Caco-2 (cell line): ENCODE measurements at regions of chr10 and their contacts with region 1.

Region 1: GRCh38 chr10:96017191-96017687 is 26.1 kb upstream of the CCNJ start:
- DNase-seq: peak; percentile 54 to 75
- H3K4me3 ChIP-seq: no peak overlapping the region
- H3K4me3 Mint-ChIP-seq: no peak overlapping the region
- H3K27ac Mint-ChIP-seq: no peak overlapping the region
- H3K4me1 ChIP-seq: 0 out of 2 replicates have a peak, but pooled peaks cover 5% of the 10 kb centered on the region
- H3K4me1 Mint-ChIP-seq: peaks cover 6% of the 10 kb centered on the region
- H3K27me3 ChIP-seq: no peaks in the 10 kb centered on the region
- H3K27me3 Mint-ChIP-seq: no peaks in the 10 kb centered on the region
- CTCF ChIP-seq: peak; percentile 64 to 75

Region 2: DNA sequence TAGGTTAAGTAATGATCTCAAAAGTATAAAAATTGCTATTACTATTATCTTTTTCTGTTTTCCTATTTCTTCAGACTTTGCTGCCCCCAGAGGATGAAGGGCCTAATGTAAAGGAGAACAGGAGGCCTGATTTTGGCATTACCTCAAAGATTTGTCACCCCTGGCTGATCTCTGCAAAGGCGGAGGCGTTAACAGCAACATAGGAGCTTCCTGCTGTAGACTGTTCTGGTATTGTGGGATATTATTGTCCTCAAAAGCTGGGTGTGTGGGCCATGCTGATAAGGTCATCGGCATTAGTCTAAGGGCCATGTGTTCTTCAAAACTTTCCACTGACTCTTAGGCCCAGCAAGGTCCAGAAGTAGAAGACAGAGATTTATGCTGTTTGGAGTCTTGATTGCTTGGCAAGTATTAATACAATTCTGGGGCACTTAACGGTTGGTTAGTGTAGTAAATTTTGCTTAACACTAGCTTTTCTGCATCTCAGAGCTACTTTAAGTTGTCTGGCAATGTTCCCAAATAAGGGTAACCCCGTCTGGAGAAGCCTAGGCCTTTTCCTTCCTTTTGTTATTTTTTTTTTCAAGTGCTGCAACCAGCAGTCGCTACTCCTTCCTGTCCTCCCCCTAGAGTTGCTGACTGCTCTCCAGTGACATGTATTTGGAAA is 275.3 kb before region 1 on chr10:
- CTCF ChIA-PET with region 1: no interaction called
- POLR2A ChIA-PET with region 1: no interaction called
- intact Hi-C with region 1: no loop called
- DNase-seq: no peak
- H3K4me3 ChIP-seq: no peak overlapping the region
- H3K4me3 Mint-ChIP-seq: no peak overlapping the region
- H3K27ac Mint-ChIP-seq: no peak overlapping the region
- H3K4me1 ChIP-seq: no peaks in the 10 kb centered on the region
- H3K4me1 Mint-ChIP-seq: no peaks in the 10 kb centered on the region
- H3K27me3 ChIP-seq: no peaks in the 10 kb centered on the region
- H3K27me3 Mint-ChIP-seq: peaks cover 5% of the 10 kb centered on the region
- CTCF ChIP-seq: no peak

Region 3: DNA sequence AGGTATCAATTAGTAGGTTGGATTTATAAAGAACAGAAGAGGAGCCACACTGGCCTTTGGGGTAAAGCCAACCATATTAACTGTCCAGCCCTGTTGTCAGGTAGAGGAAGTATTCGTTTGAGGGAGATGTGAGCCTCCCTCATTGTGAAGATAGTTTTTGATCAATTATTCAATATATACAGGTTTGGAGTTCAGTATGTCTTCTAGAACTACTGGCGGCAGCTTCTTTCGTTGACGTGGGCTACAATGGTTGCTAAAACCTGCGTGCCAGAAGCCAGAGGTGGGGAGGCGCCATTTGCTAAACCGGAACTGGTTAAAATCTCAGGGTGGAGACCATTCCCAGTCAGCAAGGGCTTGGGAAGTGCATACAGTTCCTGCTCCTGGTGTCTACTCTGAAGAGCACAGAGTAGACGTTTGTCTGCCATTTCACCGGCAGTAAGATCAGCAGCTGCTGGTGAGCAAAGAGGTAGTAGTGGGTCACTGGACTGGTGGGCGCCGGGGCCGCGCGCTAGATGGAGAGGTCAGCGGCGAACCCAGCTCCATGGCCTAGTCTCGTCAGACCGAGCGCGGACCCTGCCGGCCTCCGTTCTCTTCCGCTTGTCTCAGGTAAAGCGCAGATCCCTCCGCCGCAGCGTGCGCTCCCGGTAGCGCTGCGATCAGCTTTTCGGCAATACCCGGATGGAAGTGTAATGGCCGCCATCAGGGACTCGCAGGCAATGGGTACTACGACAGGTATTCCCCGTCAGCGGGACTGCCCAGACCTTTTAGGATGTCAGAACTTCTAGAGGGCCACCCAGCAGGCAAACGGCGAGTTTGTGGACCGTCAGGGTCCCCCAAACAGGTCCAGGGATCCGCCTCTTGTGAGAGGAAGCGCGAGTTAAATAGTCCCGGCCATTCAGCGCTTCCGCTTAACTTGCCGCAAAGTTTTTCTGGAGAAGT is 112.4 kb after region 1 on chr10 and contains the start of gene ZNF518A:
- CTCF ChIA-PET with region 1: interaction called, 10 read pairs
- POLR2A ChIA-PET with region 1: interaction called, 4 read pairs
- intact Hi-C with region 1: loop called (anchors 1 kb)
- DNase-seq: peak; percentile 95 to 97
- H3K4me3 ChIP-seq: peak within 1 kb of the TSS; percentile 75
- H3K4me3 Mint-ChIP-seq: peak within 1 kb of the TSS; percentile 93
- H3K27ac Mint-ChIP-seq: peak within 1 kb of the TSS; percentile 96
- H3K4me1 ChIP-seq: peaks cover 17% of the 10 kb centered on the region
- H3K4me1 Mint-ChIP-seq: peaks cover 12% of the 10 kb centered on the region
- H3K27me3 ChIP-seq: no peaks in the 10 kb centered on the region
- H3K27me3 Mint-ChIP-seq: no peaks in the 10 kb centered on the region
- CTCF ChIP-seq: no peak
- total RNA-seq, gene ZNF518A: 47.2 TPM in 2 replicates

Region 4: DNA sequence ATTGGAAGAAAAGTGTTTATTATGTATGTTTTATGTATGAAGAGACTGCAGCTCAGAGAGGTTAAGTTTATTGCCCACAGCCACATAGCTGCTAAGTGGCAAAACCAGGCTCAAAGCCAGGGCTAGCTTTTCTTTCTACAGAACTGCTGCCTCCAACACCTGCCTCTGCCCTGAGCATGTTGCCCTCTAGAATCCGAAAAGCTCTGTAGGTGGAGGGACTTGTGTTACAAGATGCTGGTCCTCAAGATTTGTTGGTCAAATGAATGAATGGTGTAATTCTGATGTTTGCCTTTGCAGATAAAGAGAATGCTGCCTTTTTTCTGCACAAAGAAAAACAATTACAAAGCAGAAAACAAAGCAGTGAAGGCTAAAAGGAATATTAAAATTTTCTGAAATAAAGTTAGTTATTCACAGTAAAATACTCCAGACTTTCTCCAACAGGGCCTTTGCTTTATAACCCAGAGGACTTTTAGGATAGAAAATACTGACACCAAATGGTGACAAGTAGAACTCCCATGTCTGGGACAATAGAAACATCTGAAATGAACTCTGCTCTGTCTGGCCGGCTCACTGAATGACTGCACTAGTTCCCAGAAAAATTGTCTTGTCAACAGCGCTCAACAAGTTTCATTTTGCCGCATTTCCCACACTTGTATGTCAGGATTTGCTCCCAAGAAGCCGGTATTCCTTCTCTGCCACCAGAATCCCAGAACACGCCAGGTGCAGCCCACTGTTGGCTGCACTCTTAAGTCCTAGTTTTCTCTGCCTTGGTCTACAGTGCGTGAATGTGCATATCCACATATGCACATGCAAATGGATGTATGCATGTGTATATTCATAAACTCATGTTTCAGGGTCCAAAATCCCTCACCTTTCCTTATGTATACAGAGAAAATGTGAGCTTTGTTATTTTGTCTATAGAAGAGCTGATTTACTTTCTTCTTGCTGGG is 276.0 kb after region 1 on chr10:
- CTCF ChIA-PET with region 1: interaction called, 4 read pairs
- POLR2A ChIA-PET with region 1: no interaction called
- intact Hi-C with region 1: loop called (anchors 1 kb)
- DNase-seq: peak in 1 of 2 experiments; percentile 45
- H3K4me3 ChIP-seq: no peak overlapping the region
- H3K4me3 Mint-ChIP-seq: no peak overlapping the region
- H3K27ac Mint-ChIP-seq: no peak overlapping the region
- H3K4me1 ChIP-seq: peaks cover 4% of the 10 kb centered on the region
- H3K4me1 Mint-ChIP-seq: peaks cover 7% of the 10 kb centered on the region
- H3K27me3 ChIP-seq: no peaks in the 10 kb centered on the region
- H3K27me3 Mint-ChIP-seq: peaks cover 8% of the 10 kb centered on the region
- CTCF ChIP-seq: peak; percentile 56 to 60